Cardiac septum (tissue), 1 donor: ENCODE measurements at regions of chr18 and their contacts with region 1.

Region 1: DNA sequence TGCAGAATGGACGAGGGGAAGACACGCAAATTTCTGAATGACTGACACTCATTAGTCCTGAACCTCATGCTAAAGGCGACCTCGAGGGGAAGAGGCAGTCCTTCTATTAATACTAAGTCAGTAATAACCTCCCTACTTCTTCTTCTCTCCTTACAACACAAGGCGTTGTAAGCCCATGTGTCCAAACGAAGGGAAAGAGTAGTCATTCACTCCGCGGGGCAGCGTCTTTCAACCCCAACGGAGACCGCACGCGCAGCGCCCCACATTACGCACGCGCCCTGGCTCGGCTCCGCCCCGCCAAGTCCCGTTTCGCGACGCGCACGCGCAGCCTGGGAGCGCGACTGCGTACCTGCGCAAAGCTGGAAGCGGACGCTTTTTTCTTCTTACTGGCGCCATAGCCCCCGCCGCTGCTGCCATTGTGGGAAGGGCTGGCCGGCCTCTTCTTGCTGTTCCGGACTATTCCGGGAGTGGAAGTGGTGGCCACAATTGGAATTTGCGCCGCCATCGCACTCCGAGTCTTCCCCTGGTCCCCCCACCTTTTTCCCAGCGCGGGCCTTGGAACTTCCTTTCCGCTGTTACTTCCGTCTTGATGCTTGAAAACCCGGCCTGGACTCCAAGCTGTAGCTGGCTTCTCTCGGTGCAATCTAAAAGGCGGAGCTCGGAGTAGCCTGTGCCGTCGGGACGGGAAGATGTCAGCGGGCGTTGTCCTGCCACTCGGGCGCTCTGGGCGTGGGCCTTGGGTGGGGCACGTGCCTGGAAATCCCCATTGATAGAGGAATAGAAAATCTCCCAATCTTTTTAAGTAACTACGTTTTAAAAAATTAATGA is at the start of gene INO80C:
- DNase-seq: peak; percentile 96
- total RNA-seq, gene INO80C: 21.8 TPM

Region 2: GRCh38 chr18:35459005-35459441 is 38.6 kb before region 1 on chr18:
- intact Hi-C with region 1: loop called (anchors 5 kb)
- DNase-seq: peak; percentile 90

Region 3: GRCh38 chr18:35688757-35689156 is 191.2 kb after region 1 on chr18:
- intact Hi-C with region 1: no loop called
- DNase-seq: no peak

Region 4: DNA sequence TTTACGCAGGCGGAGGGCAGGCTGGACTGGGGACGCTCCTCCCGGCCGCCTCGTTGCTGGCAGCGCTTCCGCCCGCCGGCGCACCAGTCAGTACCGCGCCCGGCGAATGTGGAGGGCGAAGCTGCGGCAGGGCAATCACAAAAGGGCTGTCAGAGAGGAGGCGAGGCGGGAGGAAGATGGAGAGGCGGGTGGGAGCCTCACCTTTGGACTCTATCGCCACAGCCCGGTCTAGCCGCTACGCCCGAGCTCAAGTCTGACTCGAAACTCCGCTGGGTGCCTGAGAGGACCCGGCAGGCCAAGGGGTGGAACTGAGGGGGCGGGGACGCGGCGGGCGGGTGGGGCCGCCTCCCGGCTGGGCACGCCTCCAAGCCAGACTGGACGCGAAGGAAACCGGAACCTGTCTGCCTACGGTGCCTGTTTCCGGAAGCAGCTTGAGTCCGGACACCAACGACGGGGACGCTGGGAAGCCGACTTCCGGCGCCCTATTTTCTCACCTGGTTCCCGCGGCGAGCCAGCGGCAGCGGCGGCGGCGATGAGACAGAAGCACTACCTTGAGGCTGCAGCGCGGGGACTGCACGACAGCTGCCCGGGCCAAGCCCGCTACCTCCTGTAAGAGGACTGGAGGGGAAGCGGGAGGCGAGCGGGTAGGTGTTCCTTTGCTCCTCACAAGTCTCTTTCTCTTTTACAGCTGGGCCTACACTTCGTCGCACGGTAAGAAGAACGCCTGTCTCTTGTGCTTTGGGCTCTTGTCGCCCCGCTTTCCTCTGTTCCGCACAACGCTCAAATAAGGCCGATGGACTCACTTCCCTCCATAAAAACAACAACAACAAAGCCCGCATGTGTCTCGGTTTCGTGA is 474.8 kb after region 1 on chr18 and contains the start of gene RMP24:
- intact Hi-C with region 1: loop called (anchors 5 kb)
- DNase-seq: peak; percentile 97